ENCODE measurements at regions of chr2 and their contacts with region 1.

Region 1: GRCh38 chr2:119407430-119408220 is 24.0 kb upstream of the TMEM37 start:
- DNase-seq: peak; percentile 73
- ATAC-seq: peak; percentile 84
- H3K4me3 ChIP-seq: no peak overlapping the region
- H3K27ac ChIP-seq: no peak overlapping the region
- H3K4me1 ChIP-seq: peaks cover 32% of the 10 kb centered on the region
- H3K27me3 ChIP-seq: no peaks in the 10 kb centered on the region
- CTCF ChIP-seq: peak; percentile 96
- EP300 ChIP-seq: no peak
- POLR2A ChIP-seq: no peak
- RAD21 ChIP-seq: peak; percentile 97

Region 2: GRCh38 chr2:119387381-119388129 is 20.1 kb before region 1 on chr2:
- CTCF ChIA-PET with region 1: no interaction called
- POLR2A ChIA-PET with region 1: no interaction called
- in situ Hi-C with region 1: no loop called
- intact Hi-C with region 1: no loop called
- DNase-seq: peak; percentile 34
- ATAC-seq: peak; percentile 88
- H3K4me3 ChIP-seq: no peak overlapping the region; a peak in 1 of 6 replicates
- H3K27ac ChIP-seq: no peak overlapping the region
- H3K4me1 ChIP-seq: peaks cover 21% of the 10 kb centered on the region
- H3K27me3 ChIP-seq: peaks cover 0 to 4% of the 10 kb centered on the region in 2 experiments; a peak in 1 of 5 replicates
- CTCF ChIP-seq: peak; percentile 29; the same call in 1 of the 2 replicates
- EP300 ChIP-seq: peak in 1 of 2 experiments; percentile 51; a peak in 1 of 4 replicates
- POLR2A ChIP-seq: no peak
- RAD21 ChIP-seq: no peak

Region 3: DNA sequence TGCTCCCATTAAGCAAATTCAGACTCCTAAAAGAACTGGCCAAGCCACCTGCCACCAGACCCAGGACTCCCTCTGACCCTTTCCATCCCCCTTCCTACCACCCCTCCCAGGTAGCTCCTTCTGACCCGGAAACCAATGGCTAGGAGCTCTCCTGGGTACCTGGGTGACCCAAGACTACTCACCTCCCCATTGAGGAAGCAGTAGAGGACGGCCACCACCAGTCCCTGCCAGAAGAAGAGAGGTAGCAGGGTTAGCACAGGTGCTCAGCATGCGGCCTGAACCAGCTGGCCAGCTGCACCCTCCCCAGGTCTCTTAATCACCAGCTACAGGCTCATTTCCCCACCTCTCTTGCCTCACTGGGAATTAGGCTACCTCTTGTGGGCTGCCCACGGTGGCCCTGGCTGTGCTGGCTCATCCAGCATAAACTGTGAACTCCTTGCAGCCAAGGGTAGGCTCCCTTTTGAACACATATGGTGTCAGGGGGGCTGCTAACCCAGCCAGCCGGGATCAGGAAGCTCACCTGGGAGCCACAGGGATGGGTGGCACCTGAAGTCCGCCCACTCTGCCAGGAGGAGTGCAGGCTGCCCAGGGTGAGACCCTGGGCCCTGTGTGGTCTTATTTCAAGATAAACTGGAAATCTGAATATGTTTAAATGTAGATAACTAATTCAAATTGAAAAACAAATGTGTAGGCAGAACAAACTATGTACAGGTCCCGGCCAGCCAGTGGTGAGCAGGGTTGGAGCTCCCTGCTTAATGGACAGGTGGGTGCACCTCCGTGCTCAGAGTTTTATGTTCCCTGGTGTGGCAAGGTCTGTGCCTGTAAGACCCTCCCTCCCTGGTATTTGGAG is 34.0 kb after region 1 on chr2:
- CTCF ChIA-PET with region 1: no interaction called
- POLR2A ChIA-PET with region 1: no interaction called
- in situ Hi-C with region 1: no loop called
- intact Hi-C with region 1: loop called (anchors 1 kb)
- DNase-seq: no peak
- ATAC-seq: no peak
- H3K4me3 ChIP-seq: no peak overlapping the region; a peak in 1 of 6 replicates
- H3K27ac ChIP-seq: no peak overlapping the region
- H3K4me1 ChIP-seq: peaks cover 64% of the 10 kb centered on the region
- H3K27me3 ChIP-seq: peaks cover 0 to 1% of the 10 kb centered on the region in 2 experiments; a peak in 1 of 5 replicates
- CTCF ChIP-seq: no peak
- EP300 ChIP-seq: no peak
- POLR2A ChIP-seq: no peak; a peak in 1 of 4 replicates
- RAD21 ChIP-seq: no peak

Region 4: GRCh38 chr2:119476301-119477021 is 68.8 kb after region 1 on chr2:
- CTCF ChIA-PET with region 1: interaction called, 159 read pairs
- POLR2A ChIA-PET with region 1: interaction called, 3 read pairs
- in situ Hi-C with region 1: loop called (anchors 5 kb)
- intact Hi-C with region 1: loop called (anchors 1 kb)
- DNase-seq: peak; percentile 79
- ATAC-seq: peak; percentile 87
- H3K4me3 ChIP-seq: no peak overlapping the region
- H3K27ac ChIP-seq: no peak overlapping the region
- H3K4me1 ChIP-seq: peaks cover 39% of the 10 kb centered on the region
- H3K27me3 ChIP-seq: peaks cover 2 to 81% of the 10 kb centered on the region in 2 experiments; a peak in 4 of 5 replicates
- CTCF ChIP-seq: peak; percentile 100
- EP300 ChIP-seq: no peak
- POLR2A ChIP-seq: no peak
- RAD21 ChIP-seq: peak; percentile 98

Region 5: GRCh38 chr2:119659601-119660342 is 252.1 kb after region 1 on chr2:
- CTCF ChIA-PET with region 1: interaction called, 6 read pairs
- POLR2A ChIA-PET with region 1: no interaction called
- in situ Hi-C with region 1: loop called (anchors 5 kb)
- intact Hi-C with region 1: loop called (anchors 1 kb)
- DNase-seq: peak; percentile 49
- ATAC-seq: peak; percentile 86
- H3K4me3 ChIP-seq: no peak overlapping the region
- H3K27ac ChIP-seq: no peak overlapping the region
- H3K4me1 ChIP-seq: no peaks in the 10 kb centered on the region
- H3K27me3 ChIP-seq: peaks cover 0 to 11% of the 10 kb centered on the region in 2 experiments; a peak in 4 of 5 replicates
- CTCF ChIP-seq: peak; percentile 89
- EP300 ChIP-seq: no peak
- POLR2A ChIP-seq: no peak
- RAD21 ChIP-seq: peak; percentile 38; the same call in 1 of the 2 replicates